B cell (primary cell): ENCODE measurements at regions of chr6 and their contacts with region 1.

Region 1: GRCh38 chr6:130037207-130037811 is 18.9 kb downstream of the L3MBTL3 start:
- DNase-seq: peak; percentile 25
- ATAC-seq: no peak
- H3K4me3 ChIP-seq: no peak overlapping the region
- H3K4me3 Mint-ChIP-seq: no peak overlapping the region
- H3K27ac ChIP-seq: no peak overlapping the region
- H3K27ac Mint-ChIP-seq: no peak overlapping the region
- H3K4me1 ChIP-seq: peaks cover 2 to 10% of the 10 kb centered on the region in 2 donors
- H3K4me1 Mint-ChIP-seq: peaks cover 66% of the 10 kb centered on the region
- H3K27me3 ChIP-seq: no peaks in the 10 kb centered on the region
- H3K27me3 Mint-ChIP-seq: no peaks in the 10 kb centered on the region
- CTCF ChIP-seq: peak; percentile 79

Region 2: GRCh38 chr6:129895692-129896091 is 141.6 kb before region 1 on chr6:
- CTCF ChIA-PET with region 1: no interaction called
- POLR2A ChIA-PET with region 1: no interaction called
- intact Hi-C with region 1: no loop called
- DNase-seq: peak; percentile 17
- ATAC-seq: no peak
- H3K4me3 ChIP-seq: no peak overlapping the region
- H3K4me3 Mint-ChIP-seq: no peak overlapping the region
- H3K27ac ChIP-seq: no peak overlapping the region
- H3K27ac Mint-ChIP-seq: no peak overlapping the region
- H3K4me1 ChIP-seq: peaks cover 4 to 8% of the 10 kb centered on the region in 2 donors
- H3K4me1 Mint-ChIP-seq: peaks cover 16% of the 10 kb centered on the region
- H3K27me3 ChIP-seq: no peaks in the 10 kb centered on the region
- H3K27me3 Mint-ChIP-seq: no peaks in the 10 kb centered on the region
- CTCF ChIP-seq: no peak

Region 3: DNA sequence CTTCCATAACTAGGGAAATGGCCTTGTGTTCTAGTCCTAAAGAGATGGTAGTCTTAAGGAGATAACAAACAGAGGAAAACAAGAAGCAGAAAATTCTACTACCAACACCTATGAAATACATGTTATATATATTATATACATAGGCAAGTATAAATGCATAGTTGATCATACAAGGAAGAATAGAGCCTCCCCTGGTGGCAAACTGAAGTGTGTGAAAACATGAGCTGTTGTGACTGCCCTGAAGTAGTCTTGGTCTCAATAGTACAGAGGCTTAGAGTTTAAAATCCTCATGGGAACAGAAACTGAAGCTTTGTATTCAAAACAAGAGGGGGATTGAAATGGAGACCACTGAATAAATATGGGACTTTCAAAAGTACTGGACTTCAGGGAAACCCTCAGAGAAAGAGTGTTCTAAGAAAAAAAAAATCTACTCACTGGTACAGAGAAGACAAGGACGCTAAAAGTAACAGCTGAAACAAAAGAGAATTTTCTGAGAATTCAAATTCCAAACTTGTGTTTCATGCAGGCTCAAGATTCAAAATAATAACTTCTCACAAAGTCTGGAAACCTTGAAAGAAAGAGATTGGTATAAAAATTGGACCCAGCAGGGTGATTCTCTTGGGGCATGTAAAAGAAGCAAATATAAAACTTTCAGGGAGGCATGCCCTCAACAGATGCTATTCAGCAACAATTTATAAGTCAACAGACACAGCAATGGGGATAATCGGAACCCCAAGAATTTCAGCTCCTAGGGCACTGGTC is 245.1 kb after region 1 on chr6:
- CTCF ChIA-PET with region 1: interaction called, 4 read pairs
- POLR2A ChIA-PET with region 1: no interaction called
- intact Hi-C with region 1: loop called (anchors 5 kb)
- DNase-seq: no peak
- ATAC-seq: peak; percentile 31
- H3K4me3 ChIP-seq: no peak overlapping the region
- H3K4me3 Mint-ChIP-seq: no peak overlapping the region
- H3K27ac ChIP-seq: no peak overlapping the region
- H3K27ac Mint-ChIP-seq: no peak overlapping the region
- H3K4me1 ChIP-seq: no peaks in the 10 kb centered on the region
- H3K4me1 Mint-ChIP-seq: peaks cover 9% of the 10 kb centered on the region
- H3K27me3 ChIP-seq: no peaks in the 10 kb centered on the region
- H3K27me3 Mint-ChIP-seq: no peaks in the 10 kb centered on the region
- CTCF ChIP-seq: peak; percentile 45

Region 4: DNA sequence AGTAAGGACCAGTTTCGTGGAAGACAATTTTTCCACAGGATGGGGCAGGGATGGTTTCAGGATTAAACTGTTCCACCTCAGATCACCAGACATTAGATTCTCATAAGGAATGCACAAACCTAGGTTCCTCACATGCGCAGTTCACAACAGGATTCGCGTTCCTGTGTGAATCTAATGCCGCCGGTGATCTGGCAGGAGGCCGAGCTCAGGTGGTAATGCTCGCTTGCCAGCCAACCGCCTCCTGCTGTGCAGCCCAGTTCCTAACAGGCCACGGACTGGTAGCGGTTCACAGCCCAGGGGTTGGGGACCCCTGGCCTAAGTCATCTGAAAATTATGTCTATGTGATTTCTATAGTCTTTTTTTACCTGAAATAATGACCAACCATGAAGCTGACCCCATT is 546.0 kb after region 1 on chr6:
- CTCF ChIA-PET with region 1: no interaction called
- POLR2A ChIA-PET with region 1: no interaction called
- intact Hi-C with region 1: no loop called
- DNase-seq: no peak
- ATAC-seq: no peak
- H3K4me3 ChIP-seq: no peak overlapping the region
- H3K4me3 Mint-ChIP-seq: no peak overlapping the region
- H3K27ac ChIP-seq: no peak overlapping the region
- H3K27ac Mint-ChIP-seq: no peak overlapping the region
- H3K4me1 ChIP-seq: no peaks in the 10 kb centered on the region
- H3K4me1 Mint-ChIP-seq: no peaks in the 10 kb centered on the region
- H3K27me3 ChIP-seq: no peaks in the 10 kb centered on the region
- H3K27me3 Mint-ChIP-seq: no peaks in the 10 kb centered on the region
- CTCF ChIP-seq: no peak

Region 5: DNA sequence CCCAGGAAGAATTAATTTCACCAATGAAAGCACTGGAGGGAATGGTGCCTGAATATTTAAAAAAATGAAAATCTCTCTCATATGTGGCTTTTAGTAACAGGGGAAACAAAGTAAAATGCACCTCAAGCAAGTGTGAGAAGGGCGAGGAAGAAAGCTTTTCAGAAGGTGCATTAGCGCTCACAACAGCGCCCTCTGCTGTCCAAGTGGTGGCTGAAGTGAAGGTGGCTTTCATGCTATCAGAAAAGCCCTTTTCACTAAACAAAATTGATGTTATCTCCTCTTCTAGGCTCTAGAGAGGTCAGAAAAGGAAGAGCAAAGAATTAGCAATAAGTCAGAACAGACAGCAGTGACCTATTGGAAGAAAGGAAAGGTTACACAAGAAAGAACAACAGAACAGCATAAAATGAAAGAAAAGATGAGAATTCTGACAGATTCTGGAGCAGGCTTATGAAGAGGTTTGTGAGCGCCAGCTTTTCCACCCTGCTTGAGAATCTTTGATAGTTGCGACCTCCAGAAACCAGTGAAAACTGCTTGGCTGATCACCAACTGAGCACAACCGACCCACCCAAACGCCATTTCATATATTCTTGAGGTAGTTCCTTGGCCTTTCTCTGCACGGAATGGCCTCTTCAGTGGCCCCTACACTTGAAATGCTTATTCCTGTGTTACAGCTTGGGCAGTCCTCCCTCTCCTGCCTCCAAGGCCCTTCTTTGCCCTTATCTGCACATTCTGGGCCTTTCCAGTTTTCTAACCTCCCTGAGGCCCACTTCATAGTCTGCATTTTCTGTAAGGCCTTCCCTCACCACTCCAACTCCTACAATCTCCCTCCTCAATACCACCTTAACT is 835.2 kb after region 1 on chr6:
- CTCF ChIA-PET with region 1: no interaction called
- POLR2A ChIA-PET with region 1: no interaction called
- intact Hi-C with region 1: loop called (anchors 5 kb)
- DNase-seq: peak; percentile 72
- ATAC-seq: peak; percentile 43
- H3K4me3 ChIP-seq: no peak overlapping the region
- H3K4me3 Mint-ChIP-seq: no peak overlapping the region
- H3K27ac ChIP-seq: no peak overlapping the region
- H3K27ac Mint-ChIP-seq: no peak overlapping the region
- H3K4me1 ChIP-seq: no peaks in the 10 kb centered on the region
- H3K4me1 Mint-ChIP-seq: no peaks in the 10 kb centered on the region
- H3K27me3 ChIP-seq: no peaks in the 10 kb centered on the region
- H3K27me3 Mint-ChIP-seq: no peaks in the 10 kb centered on the region
- CTCF ChIP-seq: peak; percentile 98